WTC11 (cell line): ENCODE measurements at regions of chr1 and their contacts with region 1.

Region 1: DNA sequence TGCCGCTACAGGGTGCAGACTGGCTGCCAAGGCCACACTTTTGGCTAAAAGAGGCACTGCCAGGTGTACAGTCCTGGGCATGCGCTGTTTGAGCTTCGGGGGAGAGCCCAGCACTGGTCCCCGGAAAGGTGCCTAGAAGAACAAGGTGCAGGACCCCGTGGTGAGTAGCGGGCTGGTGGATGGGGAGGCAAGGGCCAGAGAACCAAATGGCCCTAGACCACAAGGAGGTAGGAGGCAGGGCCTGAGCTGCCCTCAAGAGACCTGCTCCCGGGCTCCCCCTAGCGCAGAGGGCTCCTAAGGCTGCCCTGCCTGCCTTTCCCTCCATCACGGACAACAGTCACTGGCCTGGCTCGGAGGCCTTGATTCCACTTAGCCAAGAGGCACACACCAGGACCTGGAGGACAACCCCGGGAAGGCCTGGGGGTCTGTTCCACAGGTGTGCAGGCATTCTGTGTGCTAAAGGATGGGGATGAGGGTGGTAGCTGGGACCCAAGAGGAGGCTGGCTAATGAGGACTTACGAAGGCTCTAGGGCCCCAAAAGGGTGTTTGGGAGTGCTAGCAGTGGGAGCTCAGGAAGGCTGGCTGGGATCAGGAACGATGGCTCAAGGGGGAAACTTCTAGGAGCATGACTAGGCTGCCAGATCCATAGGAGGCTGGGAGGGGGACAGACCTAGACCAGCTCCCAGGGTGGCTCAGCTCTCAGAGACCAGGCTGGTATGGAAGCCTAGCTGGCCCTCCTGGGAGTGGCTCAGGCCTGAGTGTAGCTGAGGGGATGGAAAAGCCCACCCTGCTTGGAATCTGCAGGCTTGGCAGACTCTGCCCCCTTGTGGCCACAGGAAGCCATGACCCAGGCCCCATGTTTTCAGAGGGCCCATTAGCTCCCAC is 742 bp downstream of the ARTN start:
- DNase-seq: peak; percentile 92
- ATAC-seq: peak; percentile 60
- H3K4me3 Mint-ChIP-seq: peak overlapping the region; percentile 84
- H3K27ac Mint-ChIP-seq: peak overlapping the region; percentile 88
- H3K4me1 Mint-ChIP-seq: peaks cover 54% of the 10 kb centered on the region
- H3K27me3 Mint-ChIP-seq: peaks cover 8% of the 10 kb centered on the region
- CTCF ChIP-seq: peak; percentile 78

Region 2: GRCh38 chr1:43611950-43612349 is 322.4 kb before region 1 on chr1:
- CTCF ChIA-PET with region 1: no interaction called
- POLR2A ChIA-PET with region 1: no interaction called
- DNase-seq: no peak
- ATAC-seq: no peak
- H3K4me3 Mint-ChIP-seq: no peak overlapping the region
- H3K27ac Mint-ChIP-seq: peak overlapping the region; percentile 71
- H3K4me1 Mint-ChIP-seq: no peaks in the 10 kb centered on the region
- H3K27me3 Mint-ChIP-seq: no peaks in the 10 kb centered on the region
- CTCF ChIP-seq: no peak

Region 3: GRCh38 chr1:43706598-43707495 is 227.5 kb before region 1 on chr1:
- CTCF ChIA-PET with region 1: interaction called, 51 read pairs
- POLR2A ChIA-PET with region 1: interaction called, 3 read pairs
- DNase-seq: peak; percentile 93
- ATAC-seq: peak; percentile 94
- H3K4me3 Mint-ChIP-seq: peak overlapping the region; percentile 83
- H3K27ac Mint-ChIP-seq: peak overlapping the region; percentile 78
- H3K4me1 Mint-ChIP-seq: peaks cover 17% of the 10 kb centered on the region
- H3K27me3 Mint-ChIP-seq: no peaks in the 10 kb centered on the region
- CTCF ChIP-seq: no peak

Region 4: GRCh38 chr1:43774359-43774758 is 160.0 kb before region 1 on chr1:
- CTCF ChIA-PET with region 1: interaction called, 992 read pairs
- POLR2A ChIA-PET with region 1: interaction called, 5 read pairs
- DNase-seq: no peak
- ATAC-seq: no peak
- H3K4me3 Mint-ChIP-seq: no peak overlapping the region
- H3K27ac Mint-ChIP-seq: no peak overlapping the region
- H3K4me1 Mint-ChIP-seq: peaks cover 23% of the 10 kb centered on the region
- H3K27me3 Mint-ChIP-seq: no peaks in the 10 kb centered on the region; the same call in 1 of the 2 replicates
- CTCF ChIP-seq: no peak

Region 5: DNA sequence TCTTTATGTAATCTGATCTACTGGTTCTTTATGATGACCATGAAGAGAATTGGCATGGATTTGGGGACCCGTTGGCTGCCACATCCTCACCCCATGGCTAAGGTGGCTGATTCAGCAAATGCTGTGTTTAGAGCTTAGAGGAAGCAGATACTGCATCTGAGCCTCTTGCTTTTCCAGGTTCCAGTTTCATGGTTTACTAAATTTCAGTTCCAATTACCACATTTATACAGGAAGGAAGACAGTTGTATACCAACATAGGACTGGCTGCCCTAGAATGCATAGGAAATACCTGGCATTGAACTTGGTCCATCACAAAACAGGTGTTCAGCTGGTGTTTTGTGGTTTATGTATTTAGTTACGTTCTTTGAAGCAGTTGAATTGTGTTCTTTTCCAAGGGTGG is 119.9 kb before region 1 on chr1:
- CTCF ChIA-PET with region 1: interaction called, 16 read pairs
- POLR2A ChIA-PET with region 1: no interaction called
- DNase-seq: no peak
- ATAC-seq: no peak
- H3K4me3 Mint-ChIP-seq: no peak overlapping the region
- H3K27ac Mint-ChIP-seq: no peak overlapping the region
- H3K4me1 Mint-ChIP-seq: peaks cover 16% of the 10 kb centered on the region
- H3K27me3 Mint-ChIP-seq: peaks cover 3% of the 10 kb centered on the region; the same call in 1 of the 2 replicates
- CTCF ChIP-seq: no peak

Region 6: DNA sequence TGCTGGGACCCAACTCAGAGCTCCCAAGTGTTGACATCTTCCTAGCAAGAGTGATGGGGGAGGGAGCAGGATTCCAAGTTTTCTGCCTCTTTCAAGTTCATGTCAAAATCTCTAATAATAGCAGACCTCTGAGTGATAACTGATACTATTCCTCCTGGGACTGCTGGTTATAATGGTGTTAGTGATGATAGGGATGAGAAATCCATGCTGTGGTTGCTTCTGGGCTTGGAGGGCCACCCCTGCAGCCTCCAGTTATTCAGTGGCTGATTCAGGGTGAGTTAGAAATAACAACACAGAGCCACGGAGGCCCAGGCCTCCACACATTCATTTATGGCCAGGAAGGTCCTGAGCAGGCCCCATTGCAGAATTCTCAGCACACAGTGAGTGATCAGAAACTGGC is 41.3 kb before region 1 on chr1:
- CTCF ChIA-PET with region 1: interaction called, 28 read pairs
- POLR2A ChIA-PET with region 1: no interaction called
- DNase-seq: no peak
- ATAC-seq: no peak
- H3K4me3 Mint-ChIP-seq: no peak overlapping the region
- H3K27ac Mint-ChIP-seq: no peak overlapping the region
- H3K4me1 Mint-ChIP-seq: peaks cover 9% of the 10 kb centered on the region; the same call in 1 of the 2 replicates
- H3K27me3 Mint-ChIP-seq: peaks cover 3% of the 10 kb centered on the region
- CTCF ChIP-seq: no peak

Region 7: GRCh38 chr1:43974443-43975248 is 40.3 kb after region 1 on chr1 and contains the start of gene ATP6V0B:
- CTCF ChIA-PET with region 1: interaction called, 27 read pairs
- POLR2A ChIA-PET with region 1: interaction called, 5 read pairs
- DNase-seq: peak; percentile 96
- ATAC-seq: peak; percentile 70
- H3K4me3 Mint-ChIP-seq: peak within 1 kb of the TSS; percentile 89
- H3K27ac Mint-ChIP-seq: peak within 1 kb of the TSS; percentile 93
- H3K4me1 Mint-ChIP-seq: peaks cover 43% of the 10 kb centered on the region
- H3K27me3 Mint-ChIP-seq: no peaks in the 10 kb centered on the region
- CTCF ChIP-seq: no peak
- total RNA-seq, gene ATP6V0B: 108 to 115 TPM (median 110 TPM) in 3 replicates

Region 8: DNA sequence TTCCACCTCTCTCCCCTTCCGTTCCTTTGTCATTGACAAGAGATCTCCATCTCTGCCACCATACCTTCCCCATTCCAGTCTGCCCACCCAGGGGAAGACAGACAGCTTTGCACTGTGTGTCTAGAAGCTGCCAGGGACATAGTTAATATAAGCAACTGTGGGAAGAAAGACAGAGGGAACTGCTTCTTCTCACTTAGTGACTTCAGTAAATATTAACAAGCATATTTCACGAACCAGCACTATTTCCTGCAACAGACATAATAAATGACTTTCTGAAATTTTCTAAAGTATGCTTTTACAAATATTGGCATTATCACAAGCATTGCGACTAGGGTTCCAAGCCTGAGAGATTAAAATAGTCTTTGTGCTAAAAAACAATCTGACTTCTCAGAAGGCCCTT is 140.1 kb after region 1 on chr1:
- CTCF ChIA-PET with region 1: no interaction called
- POLR2A ChIA-PET with region 1: no interaction called
- DNase-seq: no peak
- ATAC-seq: no peak
- H3K4me3 Mint-ChIP-seq: no peak overlapping the region
- H3K27ac Mint-ChIP-seq: no peak overlapping the region
- H3K4me1 Mint-ChIP-seq: peaks cover 17% of the 10 kb centered on the region
- H3K27me3 Mint-ChIP-seq: peaks cover 21% of the 10 kb centered on the region
- CTCF ChIP-seq: no peak

Region 9: DNA sequence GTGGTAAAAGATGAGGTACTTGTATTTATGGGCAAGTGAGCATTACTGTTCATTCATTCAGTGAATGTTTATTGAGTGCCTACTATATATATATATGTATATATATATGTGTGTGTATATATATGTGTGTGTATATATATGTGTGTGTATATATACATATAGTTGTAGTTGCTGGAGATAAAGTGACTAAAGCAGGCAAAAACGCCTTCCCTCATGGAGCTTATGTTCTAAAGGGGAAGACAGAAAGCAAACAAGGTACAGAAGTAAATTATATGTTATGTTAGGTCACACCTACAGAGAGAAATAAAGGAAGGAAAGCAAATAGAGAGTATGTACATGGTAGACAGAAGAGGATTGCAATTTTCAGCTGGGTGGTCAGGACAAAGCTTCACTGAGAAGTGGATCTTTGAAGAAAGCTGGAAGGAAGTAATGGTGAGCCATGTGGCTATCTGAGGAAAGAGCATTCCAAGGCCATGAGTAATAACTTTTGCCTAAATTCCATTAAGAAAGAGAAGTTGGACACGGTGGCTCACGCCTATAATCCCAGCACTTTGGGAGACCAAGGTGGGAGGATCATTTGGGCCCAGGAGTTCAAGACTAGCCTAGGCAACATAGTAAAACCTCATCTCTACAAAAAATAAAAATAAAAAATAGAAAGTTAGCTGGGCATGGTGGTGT is 150.8 kb after region 1 on chr1:
- CTCF ChIA-PET with region 1: no interaction called
- POLR2A ChIA-PET with region 1: no interaction called
- DNase-seq: no peak
- ATAC-seq: no peak
- H3K4me3 Mint-ChIP-seq: no peak overlapping the region
- H3K27ac Mint-ChIP-seq: no peak overlapping the region
- H3K4me1 Mint-ChIP-seq: peaks cover 20% of the 10 kb centered on the region
- H3K27me3 Mint-ChIP-seq: 0 out of 2 replicates have a peak, but pooled peaks cover 5% of the 10 kb centered on the region
- CTCF ChIP-seq: no peak